ENCODE measurements at regions of chr17 and their contacts with region 1.

Region 1: DNA sequence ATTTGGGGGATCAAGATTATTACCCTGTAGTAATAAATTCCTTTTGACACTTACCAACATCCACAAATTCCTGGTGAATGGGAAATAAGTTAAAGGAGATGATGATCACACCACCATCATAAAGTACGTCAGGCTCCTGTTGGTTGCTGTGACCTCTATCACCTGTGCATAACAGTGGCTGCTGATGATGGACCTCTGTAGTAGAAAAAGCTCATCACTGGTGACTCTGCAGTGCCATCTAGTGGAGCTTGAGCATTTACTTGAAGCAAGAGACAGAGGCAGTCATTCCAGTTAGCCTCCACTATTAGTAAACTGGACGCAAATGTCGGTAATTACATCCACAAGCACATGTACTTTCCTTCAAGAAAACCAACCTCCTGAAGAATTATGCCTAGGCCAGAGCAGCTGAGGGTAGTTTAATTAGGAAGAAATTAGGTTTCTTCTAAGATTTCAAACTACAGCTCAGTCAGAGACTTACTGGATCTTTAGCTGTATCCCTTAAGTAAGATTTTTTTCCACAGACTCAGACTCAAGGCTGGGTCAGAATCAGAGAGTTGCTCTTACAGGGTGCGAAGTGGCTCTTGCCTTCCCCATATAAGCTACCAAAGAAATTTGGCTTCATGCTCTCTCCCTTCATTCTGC is 39.3 kb downstream of the CYB561 start:
- DNase-seq: peak; percentile 76
- CTCF ChIP-seq: peak; percentile 86

Region 2: GRCh38 chr17:62692721-62693483 is 713.9 kb before region 1 on chr17:
- in situ Hi-C with region 1: loop called (anchors 25 kb)
- DNase-seq: no peak
- CTCF ChIP-seq: peak; percentile 4

Region 3: DNA sequence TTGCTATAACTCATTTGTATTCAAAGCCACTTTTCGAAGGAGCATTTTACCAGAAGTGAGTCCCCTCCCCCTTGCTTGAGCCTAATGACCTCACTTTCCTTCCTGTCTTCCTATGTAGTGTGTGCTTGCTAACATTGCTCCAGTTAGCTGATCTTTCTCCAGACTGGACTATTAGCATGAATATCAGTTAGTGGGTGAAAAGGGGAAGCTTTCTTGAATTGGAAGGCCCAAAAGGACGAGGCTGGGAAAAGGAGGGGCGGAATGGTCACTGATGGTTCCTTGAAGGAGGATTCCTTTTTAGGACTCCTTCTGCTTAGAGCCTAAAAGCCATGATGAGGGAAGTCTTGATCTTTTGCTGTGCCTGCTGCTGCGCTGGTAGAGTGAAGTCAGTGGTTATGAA is 227.4 kb after region 1 on chr17:
- in situ Hi-C with region 1: no loop called
- DNase-seq: no peak
- CTCF ChIP-seq: no peak

Region 4: DNA sequence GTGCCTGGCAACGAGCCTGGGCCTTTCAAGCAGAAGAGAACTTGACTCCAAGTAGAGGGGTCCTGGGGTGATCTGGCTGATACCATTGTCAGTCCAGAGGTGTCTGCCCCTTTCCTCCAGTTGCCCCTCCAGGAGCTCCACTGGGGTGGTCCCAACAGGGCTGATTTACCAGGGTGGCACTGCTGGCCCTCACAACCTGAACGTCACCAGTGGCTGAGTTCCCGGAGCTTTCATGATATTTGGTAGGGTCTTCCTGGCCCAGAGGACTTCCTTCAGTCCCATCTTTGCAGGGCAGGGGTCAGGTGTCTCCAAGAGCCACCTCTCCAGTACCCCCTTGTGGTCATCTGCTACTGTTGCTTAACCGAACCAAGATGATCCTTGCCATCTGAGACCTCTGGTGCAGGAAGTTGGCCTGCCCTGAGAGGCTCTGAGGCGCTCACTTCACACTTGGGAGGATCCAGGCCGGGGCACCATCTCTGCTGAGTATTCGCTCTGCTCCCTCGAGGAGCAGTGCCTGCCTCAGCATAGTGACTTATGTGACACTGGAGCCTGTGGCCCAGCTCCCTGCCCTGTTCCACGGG is 289.7 kb after region 1 on chr17:
- in situ Hi-C with region 1: no loop called
- DNase-seq: peak; percentile 66
- CTCF ChIP-seq: peak; percentile 15

Measured in GM13976 (cell line).